Activated CD4-positive, alpha-beta T cell treated with anti-CD3 and anti-CD28 coated beads, Interleukin-2, amount 10 ng/mL, durations not matched to agents 24 days and 14 days (primary cell): ENCODE measurements at regions of chr7 and their contacts with region 1.

Region 1: DNA sequence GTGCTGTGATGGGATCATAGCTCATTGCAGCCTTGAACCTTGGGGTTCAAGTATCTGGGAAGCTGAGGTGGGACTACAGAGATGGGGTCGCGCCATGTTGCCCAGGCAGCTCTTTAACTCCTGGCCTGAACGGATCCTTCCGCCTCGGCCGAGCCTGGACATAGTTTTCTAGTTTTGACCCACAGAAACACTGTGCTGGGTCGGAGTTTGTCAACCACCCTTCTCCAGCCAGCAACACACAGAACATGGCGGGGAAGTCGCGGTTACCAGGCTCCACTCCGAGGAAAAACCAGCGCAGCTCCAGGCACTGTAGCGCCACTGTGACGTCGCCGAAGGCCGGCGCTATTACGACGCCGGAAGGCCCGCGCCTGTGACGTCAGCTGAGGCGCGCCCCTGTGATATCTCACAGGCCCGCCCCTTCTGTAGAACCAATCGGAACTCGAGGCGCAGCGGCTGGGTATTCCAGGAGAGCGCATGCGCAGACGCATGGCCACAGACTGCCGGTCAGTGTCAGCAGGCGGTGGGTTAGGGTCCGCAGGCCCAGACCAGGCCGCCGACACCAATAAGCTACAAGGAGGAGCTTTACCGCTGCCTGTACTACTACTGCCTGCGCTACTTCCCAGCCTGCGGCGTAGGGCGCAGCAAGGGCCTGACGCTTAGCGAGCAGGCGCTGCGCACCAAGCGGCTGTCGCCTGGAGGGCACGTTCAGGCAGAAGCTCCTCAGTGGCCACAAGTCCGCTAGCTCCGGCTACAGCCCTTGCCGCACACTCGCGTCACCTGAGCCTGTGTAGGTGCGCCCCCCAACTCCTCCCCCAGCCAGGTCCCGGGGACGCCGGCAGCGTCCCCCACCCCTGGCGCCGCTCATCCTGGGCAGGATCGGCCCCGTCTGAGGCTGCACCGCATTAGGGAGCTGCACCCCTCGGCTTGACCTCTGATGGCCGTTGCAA is 135.2 kb upstream of the KCTD7 start:
- DNase-seq: peak; percentile 99
- H3K4me3 Mint-ChIP-seq: peak overlapping the region; percentile 92
- H3K27ac Mint-ChIP-seq: peak overlapping the region; percentile 95
- H3K4me1 Mint-ChIP-seq: peaks cover 12% of the 10 kb centered on the region
- H3K27me3 Mint-ChIP-seq: no peaks in the 10 kb centered on the region

Region 2: GRCh38 chr7:66413379-66414114 is 80.0 kb before region 1 on chr7:
- intact Hi-C with region 1: loop called (anchors 2 kb)
- DNase-seq: peak; percentile 94
- H3K4me3 Mint-ChIP-seq: peak overlapping the region; percentile 77
- H3K27ac Mint-ChIP-seq: peak overlapping the region; percentile 70
- H3K4me1 Mint-ChIP-seq: peaks cover 15% of the 10 kb centered on the region
- H3K27me3 Mint-ChIP-seq: no peaks in the 10 kb centered on the region

Region 3: DNA sequence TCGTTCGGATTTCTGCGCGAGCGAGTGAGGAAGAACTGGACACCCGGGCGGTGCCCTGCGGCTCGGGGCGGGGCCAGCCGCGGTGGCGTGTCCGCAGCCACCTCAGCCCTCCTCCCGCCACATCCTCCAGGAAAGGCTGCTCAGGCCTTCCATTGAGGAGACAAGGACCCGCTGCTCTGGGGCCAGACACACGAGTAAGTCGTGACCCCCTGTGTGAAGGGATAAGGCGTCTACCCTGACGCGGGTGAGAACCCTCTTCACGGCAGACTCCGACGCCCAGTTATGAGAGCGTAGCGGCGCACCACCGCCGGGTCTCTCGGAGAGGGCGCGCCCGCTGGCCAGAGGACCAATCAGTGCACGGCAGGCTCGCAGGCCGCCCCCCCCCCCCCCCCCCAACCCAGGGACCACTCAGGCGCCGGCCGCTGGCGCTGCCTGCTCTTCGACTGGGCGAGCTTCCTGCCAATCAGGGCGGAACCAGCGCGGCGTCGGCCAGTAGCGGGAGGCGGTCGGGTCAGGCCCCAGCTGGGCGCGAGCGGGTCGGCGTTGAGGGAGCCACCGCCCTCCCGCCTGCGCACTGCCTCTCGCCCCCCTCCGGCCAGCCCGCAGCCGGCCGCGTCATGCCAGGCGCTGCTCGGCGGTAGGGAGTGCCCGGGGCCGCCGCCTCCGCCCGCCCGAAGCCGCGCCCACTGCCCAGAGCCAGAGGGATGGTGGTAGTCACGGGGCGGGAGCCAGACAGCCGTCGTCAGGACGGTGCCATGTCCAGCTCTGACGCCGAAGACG is 135.0 kb after region 1 on chr7 and contains the start of gene KCTD7:
- intact Hi-C with region 1: loop called (anchors 1 kb)
- DNase-seq: peak; percentile 98
- H3K4me3 Mint-ChIP-seq: peak within 1 kb of the TSS; percentile 90
- H3K27ac Mint-ChIP-seq: peak within 1 kb of the TSS; percentile 84
- H3K4me1 Mint-ChIP-seq: peaks cover 44% of the 10 kb centered on the region
- H3K27me3 Mint-ChIP-seq: no peaks in the 10 kb centered on the region
- total RNA-seq, gene KCTD7: 8.9 and 9.2 TPM in 2 replicates

Region 4: GRCh38 chr7:67302113-67303039 is 808.9 kb after region 1 on chr7:
- intact Hi-C with region 1: loop called (anchors 10 kb)
- DNase-seq: peak; percentile 99
- H3K4me3 Mint-ChIP-seq: peak overlapping the region; percentile 90
- H3K27ac Mint-ChIP-seq: peak overlapping the region; percentile 97
- H3K4me1 Mint-ChIP-seq: peaks cover 26% of the 10 kb centered on the region
- H3K27me3 Mint-ChIP-seq: peaks cover 2% of the 10 kb centered on the region